ENCODE measurements at regions of chr17 and their contacts with region 1.

Region 1: DNA sequence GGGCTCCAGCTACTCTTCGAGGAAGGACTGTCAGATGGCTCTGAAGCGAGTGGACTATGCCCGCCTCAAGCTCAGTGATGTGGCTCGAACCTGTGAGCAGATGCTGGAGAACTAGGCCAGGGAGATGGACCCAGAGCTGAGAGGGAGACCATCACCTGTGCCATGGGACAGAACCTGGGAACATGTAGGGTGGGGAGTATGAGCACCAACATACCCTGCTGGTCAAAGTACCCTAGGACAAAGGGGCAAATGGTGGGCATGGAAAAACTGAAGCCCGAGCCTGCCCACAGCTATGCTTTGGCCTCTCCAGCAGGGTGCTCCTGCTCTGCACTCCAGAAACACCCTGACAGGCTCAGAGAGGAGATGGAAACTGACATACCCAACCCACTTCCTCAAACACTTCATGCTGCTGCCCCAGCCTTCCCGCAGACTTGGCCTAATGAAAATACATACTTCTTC is 1.9 kb downstream of the MED11 start:
- DNase-seq: peak; percentile 37
- ATAC-seq: peak; percentile 7; the same call in 2 of the 3 replicates
- H3K4me3 ChIP-seq: no peak overlapping the region
- H3K27ac ChIP-seq: peak overlapping the region; percentile 10
- H3K4me1 ChIP-seq: peaks cover 71% of the 10 kb centered on the region
- H3K27me3 ChIP-seq: no peaks in the 10 kb centered on the region; a peak in 1 of 5 replicates
- CTCF ChIP-seq: peak; percentile 60
- EP300 ChIP-seq: no peak
- POLR2A ChIP-seq: 0 out of 4 replicates have a peak, but pooled peaks of 1 of the 2 experiments have one; percentile 12
- RAD21 ChIP-seq: peak; percentile 46

Region 2: DNA sequence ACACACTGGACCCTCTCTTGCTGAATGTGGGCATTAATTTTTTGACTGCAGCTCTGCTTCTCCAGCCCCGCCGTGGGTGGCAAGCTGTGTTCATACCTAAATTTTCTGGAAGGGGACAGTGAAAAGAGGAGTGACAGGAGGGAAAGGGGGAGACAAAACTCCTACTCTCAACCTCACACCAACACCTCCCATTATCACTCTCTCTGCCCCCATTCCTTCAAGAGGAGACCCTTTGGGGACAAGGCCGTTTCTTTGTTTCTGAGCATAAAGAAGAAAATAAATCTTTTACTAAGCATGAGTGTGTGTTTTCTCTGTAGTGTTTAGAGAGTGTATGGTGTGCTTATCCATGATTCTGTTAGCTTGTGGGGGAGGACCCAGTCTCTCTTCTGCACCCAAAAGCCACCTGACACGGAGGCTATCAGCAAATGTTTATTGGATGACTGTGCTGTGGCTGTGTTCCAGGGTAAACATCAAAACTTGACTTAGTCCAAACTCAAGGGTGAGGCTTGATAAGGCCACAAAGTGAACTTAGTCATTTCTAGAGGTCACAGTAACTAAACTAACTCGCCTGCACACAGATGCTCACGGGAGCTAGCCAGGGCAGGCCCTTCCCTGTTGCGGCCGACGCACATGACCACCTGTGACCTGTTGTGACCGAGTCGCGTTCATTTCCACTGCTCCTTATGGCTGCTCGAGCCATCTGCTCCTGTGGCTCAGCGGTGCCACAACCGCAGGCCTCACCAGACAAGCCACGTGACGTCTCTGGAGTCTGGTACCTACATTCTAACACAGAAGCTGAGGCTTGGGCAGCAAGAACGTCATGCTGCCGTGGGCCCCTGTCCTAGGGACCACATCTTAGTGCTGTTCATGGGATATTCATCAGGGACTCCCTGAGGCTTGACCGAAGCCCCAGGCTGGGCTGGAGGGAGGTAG is 11.6 kb before region 1 on chr17:
- CTCF ChIA-PET with region 1: no interaction called
- POLR2A ChIA-PET with region 1: interaction called, 48 read pairs
- in situ Hi-C with region 1: no loop called
- intact Hi-C with region 1: loop called (anchors 1 kb)
- DNase-seq: peak; percentile 95
- ATAC-seq: peak; percentile 90
- H3K4me3 ChIP-seq: peak overlapping the region in 1 of 3 experiments; percentile 58; a peak in 3 of 6 replicates
- H3K27ac ChIP-seq: peak overlapping the region; percentile 68
- H3K4me1 ChIP-seq: peaks cover 35% of the 10 kb centered on the region
- H3K27me3 ChIP-seq: no peaks in the 10 kb centered on the region
- CTCF ChIP-seq: no peak
- EP300 ChIP-seq: peak in 1 of 2 experiments; percentile 85; a peak in 2 of 4 replicates
- POLR2A ChIP-seq: peak; percentile 50 to 69; a peak in 3 of 4 replicates
- RAD21 ChIP-seq: 0 out of 2 replicates have a peak, but pooled peaks have one; percentile 12

Region 3: GRCh38 chr17:4777969-4778761 is 45.1 kb after region 1 on chr17:
- CTCF ChIA-PET with region 1: no interaction called
- POLR2A ChIA-PET with region 1: interaction called, 56 read pairs
- in situ Hi-C with region 1: loop called (anchors 10 kb)
- intact Hi-C with region 1: loop called (anchors 5 kb)
- DNase-seq: peak; percentile 83
- ATAC-seq: peak; percentile 86
- H3K4me3 ChIP-seq: 0 out of 6 replicates have a peak overlapping the region, but pooled peaks of 1 of the 3 experiments have one; percentile 7
- H3K27ac ChIP-seq: peak overlapping the region; percentile 74
- H3K4me1 ChIP-seq: peaks cover 65% of the 10 kb centered on the region
- H3K27me3 ChIP-seq: no peaks in the 10 kb centered on the region
- CTCF ChIP-seq: no peak
- EP300 ChIP-seq: peak; percentile 66 to 67
- POLR2A ChIP-seq: no peak; a peak in 1 of 4 replicates
- RAD21 ChIP-seq: no peak

Region 4: GRCh38 chr17:4881761-4882555 is 148.9 kb after region 1 on chr17:
- CTCF ChIA-PET with region 1: interaction called, 5 read pairs
- POLR2A ChIA-PET with region 1: no interaction called
- in situ Hi-C with region 1: loop called (anchors 5 kb)
- intact Hi-C with region 1: no loop called
- DNase-seq: peak; percentile 41
- ATAC-seq: peak; percentile 90
- H3K4me3 ChIP-seq: no peak overlapping the region
- H3K27ac ChIP-seq: no peak overlapping the region
- H3K4me1 ChIP-seq: no peaks in the 10 kb centered on the region
- H3K27me3 ChIP-seq: no peaks in the 10 kb centered on the region
- CTCF ChIP-seq: peak; percentile 88
- EP300 ChIP-seq: no peak
- POLR2A ChIP-seq: no peak
- RAD21 ChIP-seq: peak; percentile 84

Region 5: GRCh38 chr17:5164436-5164835 is 431.3 kb after region 1 on chr17:
- CTCF ChIA-PET with region 1: no interaction called
- POLR2A ChIA-PET with region 1: no interaction called
- in situ Hi-C with region 1: no loop called
- intact Hi-C with region 1: no loop called
- DNase-seq: no peak
- ATAC-seq: no peak
- H3K4me3 ChIP-seq: no peak overlapping the region
- H3K27ac ChIP-seq: no peak overlapping the region
- H3K4me1 ChIP-seq: peaks cover 6% of the 10 kb centered on the region; the same call in 1 of the 2 replicates
- H3K27me3 ChIP-seq: no peaks in the 10 kb centered on the region; a peak in 1 of 5 replicates
- CTCF ChIP-seq: no peak
- EP300 ChIP-seq: no peak
- POLR2A ChIP-seq: no peak
- RAD21 ChIP-seq: no peak